ENCODE measurements at regions of chr10 and their contacts with region 1.

Region 1: DNA sequence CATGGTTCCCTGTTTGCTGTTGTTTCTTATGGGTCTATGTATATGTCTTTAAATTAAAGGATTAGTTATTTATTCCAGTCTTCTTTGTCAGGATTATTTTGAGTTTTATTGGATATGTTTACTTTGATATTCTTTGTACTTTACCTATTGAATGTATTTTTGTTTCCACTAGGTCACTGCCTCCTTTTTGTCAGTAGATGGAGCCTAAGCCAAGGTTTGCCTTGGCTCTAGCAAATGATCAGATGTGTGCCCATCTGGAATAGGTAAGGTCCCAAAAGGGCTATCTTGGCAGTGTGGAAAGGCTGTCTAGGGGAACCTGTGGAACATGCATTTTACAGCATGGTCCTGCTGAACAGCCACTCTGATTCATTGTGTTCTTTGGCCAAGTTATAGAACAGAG is 337.3 kb upstream of the GHITM start:
- DNase-seq: no peak
- H3K4me3 ChIP-seq: no peak overlapping the region
- H3K27ac ChIP-seq: no peak overlapping the region
- H3K4me1 ChIP-seq: no peaks in the 10 kb centered on the region
- H3K27me3 ChIP-seq: no peaks in the 10 kb centered on the region
- CTCF ChIP-seq: no peak

Region 2: DNA sequence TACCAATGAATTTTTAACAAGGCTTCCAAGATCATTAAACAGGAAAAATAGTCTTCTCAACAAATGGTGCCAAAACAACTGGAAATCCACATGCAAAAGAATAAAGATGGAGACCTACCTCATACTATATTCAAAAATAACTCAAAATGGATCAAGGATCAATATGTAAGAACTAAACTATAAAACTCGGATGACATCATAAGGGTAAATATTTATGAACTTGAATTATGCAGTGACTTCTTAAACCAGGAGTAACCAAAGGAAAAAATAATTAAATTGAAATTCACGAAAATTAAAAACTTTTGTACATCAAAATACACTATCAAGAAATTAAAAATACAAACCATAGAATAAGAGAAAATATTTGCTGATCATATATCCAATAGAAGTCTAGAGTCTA is 391.4 kb before region 1 on chr10:
- CTCF ChIA-PET with region 1: interaction called, 12 read pairs
- POLR2A ChIA-PET with region 1: no interaction called
- intact Hi-C with region 1: no loop called
- DNase-seq: no peak
- H3K4me3 ChIP-seq: no peak overlapping the region
- H3K27ac ChIP-seq: no peak overlapping the region
- H3K4me1 ChIP-seq: no peaks in the 10 kb centered on the region
- H3K27me3 ChIP-seq: no peaks in the 10 kb centered on the region
- CTCF ChIP-seq: no peak

Region 3: DNA sequence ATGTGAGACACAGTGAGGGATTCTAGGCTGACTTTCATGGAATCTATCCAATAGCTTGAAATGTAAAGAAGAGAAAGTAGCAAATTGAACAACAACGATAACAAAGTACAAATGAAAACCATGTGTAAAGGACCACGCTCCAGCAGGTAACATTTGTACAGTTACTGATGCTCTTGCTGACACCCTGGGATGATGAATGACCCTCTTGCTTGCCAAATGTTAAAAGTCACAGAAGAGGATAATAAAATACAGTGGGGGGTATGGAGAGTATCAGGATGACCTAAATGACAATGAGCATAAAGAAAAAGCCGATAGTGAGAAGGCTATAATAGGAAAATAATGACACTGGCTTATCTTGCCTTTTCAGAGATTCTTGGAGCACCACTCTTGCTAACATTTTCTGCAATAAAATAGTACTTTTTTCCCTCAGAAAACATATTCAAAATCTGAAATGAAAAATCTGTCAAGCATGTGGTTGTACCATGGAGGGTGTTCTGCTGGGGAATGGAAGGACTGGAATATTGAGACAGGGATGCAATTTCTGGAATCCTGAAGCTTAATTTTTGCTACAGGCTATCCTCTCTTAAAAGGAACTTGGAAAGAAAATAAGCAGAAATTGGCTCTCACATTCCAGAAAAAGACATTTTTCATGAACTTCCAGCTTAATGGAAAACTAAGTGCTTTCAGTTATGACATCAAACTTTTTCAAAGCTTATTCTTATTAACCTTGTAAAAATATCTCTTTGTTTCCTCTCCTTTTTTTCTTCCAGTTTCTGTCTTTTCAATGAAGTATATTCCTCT is 34.2 kb after region 1 on chr10:
- CTCF ChIA-PET with region 1: no interaction called
- POLR2A ChIA-PET with region 1: no interaction called
- intact Hi-C with region 1: no loop called
- DNase-seq: no peak
- H3K4me3 ChIP-seq: no peak overlapping the region
- H3K27ac ChIP-seq: no peak overlapping the region
- H3K4me1 ChIP-seq: no peaks in the 10 kb centered on the region
- H3K27me3 ChIP-seq: no peaks in the 10 kb centered on the region
- CTCF ChIP-seq: no peak